ENCODE measurements at regions of chr17 and their contacts with region 1.

Region 1: DNA sequence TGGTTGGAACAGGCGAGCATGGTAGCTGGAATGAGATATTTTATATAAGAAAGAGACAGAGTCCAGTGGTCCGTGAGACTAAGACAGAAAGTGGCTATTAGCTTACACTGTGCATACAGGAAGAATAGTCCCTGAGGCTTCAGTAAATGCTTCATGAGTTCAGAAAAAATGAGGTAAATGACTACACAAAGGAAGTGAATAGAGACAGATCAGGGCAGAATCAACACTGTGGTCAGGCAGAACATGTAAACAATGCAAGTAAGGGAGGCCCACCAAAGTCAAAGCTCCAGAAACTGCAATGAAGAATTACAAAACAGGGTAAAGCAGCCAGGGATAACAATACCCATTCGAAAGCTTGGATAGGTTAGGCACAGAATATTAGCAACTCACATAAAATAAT is 4.8 kb downstream of the ABCA10 start:
- DNase-seq: no peak
- H3K4me3 ChIP-seq: no peak overlapping the region
- H3K4me3 Mint-ChIP-seq: no peak overlapping the region
- H3K27ac ChIP-seq: no peak overlapping the region
- H3K27ac Mint-ChIP-seq: no peak overlapping the region
- H3K4me1 ChIP-seq: peaks cover 5 to 15% of the 10 kb centered on the region in 2 donors
- H3K4me1 Mint-ChIP-seq: peaks cover 16% of the 10 kb centered on the region
- H3K27me3 ChIP-seq: no peaks in the 10 kb centered on the region
- H3K27me3 Mint-ChIP-seq: no peaks in the 10 kb centered on the region
- CTCF ChIP-seq: no peak

Region 2: GRCh38 chr17:69208640-69209039 is 15.2 kb before region 1 on chr17:
- intact Hi-C with region 1: loop called in 1 of 2 experiments (anchors 2 kb)
- DNase-seq: no peak
- H3K4me3 ChIP-seq: no peak overlapping the region
- H3K4me3 Mint-ChIP-seq: no peak overlapping the region
- H3K27ac ChIP-seq: no peak overlapping the region
- H3K27ac Mint-ChIP-seq: no peak overlapping the region
- H3K4me1 ChIP-seq: no peaks in the 10 kb centered on the region
- H3K4me1 Mint-ChIP-seq: peaks cover 12% of the 10 kb centered on the region
- H3K27me3 ChIP-seq: no peaks in the 10 kb centered on the region
- H3K27me3 Mint-ChIP-seq: peaks cover 0 to 5% (median 0%) of the 10 kb centered on the region in 3 donors
- CTCF ChIP-seq: no peak

Measured in CD14-positive monocyte (primary cell).